H1 (cell line): ENCODE measurements at regions of chr1 and their contacts with region 1.

Region 1: GRCh38 chr1:94061513-94062443 is 59.2 kb downstream of the ABCA4 start:
- DNase-seq: peak in 1 of 2 experiments; percentile 79
- H3K4me3 ChIP-seq: no peak overlapping the region
- H3K27ac ChIP-seq: no peak overlapping the region
- H3K4me1 ChIP-seq: peaks cover 0 to 4% (median 1%) of the 10 kb centered on the region in 4 experiments; a peak in 1 of 7 replicates
- H3K27me3 ChIP-seq: peaks cover 1 to 17% (median 10%) of the 10 kb centered on the region in 4 experiments; a peak in 6 of 7 replicates
- CTCF ChIP-seq: peak; percentile 79 to 95 (median 93)
- EP300 ChIP-seq: no peak
- POLR2A ChIP-seq: no peak
- RAD21 ChIP-seq: peak; percentile 95 to 96

Region 2: GRCh38 chr1:94081566-94082344 is 20.0 kb after region 1 on chr1:
- CTCF ChIA-PET with region 1: interaction called, 119 read pairs
- POLR2A ChIA-PET with region 1: no interaction called
- DNase-seq: no peak
- H3K4me3 ChIP-seq: no peak overlapping the region
- H3K27ac ChIP-seq: no peak overlapping the region
- H3K4me1 ChIP-seq: peaks cover 0 to 3% (median under 1%) of the 10 kb centered on the region in 4 experiments; a peak in 1 of 7 replicates
- H3K27me3 ChIP-seq: no peaks in the 10 kb centered on the region; a peak in 3 of 7 replicates
- CTCF ChIP-seq: no peak
- EP300 ChIP-seq: no peak
- POLR2A ChIP-seq: no peak
- RAD21 ChIP-seq: no peak

Region 3: DNA sequence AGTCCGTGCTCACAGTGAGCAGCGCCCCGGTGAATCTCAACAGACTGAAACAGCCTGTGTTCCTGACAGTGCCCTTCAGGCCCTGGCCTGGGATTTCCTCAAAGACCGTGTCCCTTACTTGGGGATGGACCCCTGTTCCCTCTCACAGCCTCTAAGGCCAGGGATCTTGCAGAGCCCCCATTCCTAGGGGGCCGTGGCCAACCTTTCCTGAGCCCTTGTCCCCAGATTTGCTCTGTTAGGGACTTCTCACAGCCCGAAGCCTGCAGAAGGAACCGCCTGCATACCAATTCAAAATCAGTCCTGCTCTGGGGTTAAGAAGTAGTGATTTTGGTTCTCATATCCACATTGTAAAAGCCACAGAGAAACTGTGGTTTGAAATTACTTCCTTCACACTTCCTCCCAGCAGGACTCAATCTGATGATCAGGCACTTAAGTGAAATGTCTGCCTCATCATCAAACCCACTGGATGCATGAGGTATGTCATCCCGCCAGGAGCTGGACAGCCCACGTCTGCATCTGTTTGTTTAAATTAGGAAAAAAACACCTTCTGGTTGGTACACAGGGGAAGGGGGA is 44.3 kb after region 1 on chr1:
- CTCF ChIA-PET with region 1: interaction called, 20 read pairs
- POLR2A ChIA-PET with region 1: no interaction called
- DNase-seq: no peak
- H3K4me3 ChIP-seq: peak overlapping the region in 1 of 4 experiments; percentile 14; a peak in 1 of 8 replicates
- H3K27ac ChIP-seq: no peak overlapping the region
- H3K4me1 ChIP-seq: peaks cover 0 to 13% (median 7%) of the 10 kb centered on the region in 4 experiments; a peak in 6 of 7 replicates
- H3K27me3 ChIP-seq: peaks cover 0 to 5% (median 2%) of the 10 kb centered on the region in 4 experiments; a peak in 3 of 7 replicates
- CTCF ChIP-seq: no peak
- EP300 ChIP-seq: no peak
- POLR2A ChIP-seq: no peak
- RAD21 ChIP-seq: no peak

Region 4: DNA sequence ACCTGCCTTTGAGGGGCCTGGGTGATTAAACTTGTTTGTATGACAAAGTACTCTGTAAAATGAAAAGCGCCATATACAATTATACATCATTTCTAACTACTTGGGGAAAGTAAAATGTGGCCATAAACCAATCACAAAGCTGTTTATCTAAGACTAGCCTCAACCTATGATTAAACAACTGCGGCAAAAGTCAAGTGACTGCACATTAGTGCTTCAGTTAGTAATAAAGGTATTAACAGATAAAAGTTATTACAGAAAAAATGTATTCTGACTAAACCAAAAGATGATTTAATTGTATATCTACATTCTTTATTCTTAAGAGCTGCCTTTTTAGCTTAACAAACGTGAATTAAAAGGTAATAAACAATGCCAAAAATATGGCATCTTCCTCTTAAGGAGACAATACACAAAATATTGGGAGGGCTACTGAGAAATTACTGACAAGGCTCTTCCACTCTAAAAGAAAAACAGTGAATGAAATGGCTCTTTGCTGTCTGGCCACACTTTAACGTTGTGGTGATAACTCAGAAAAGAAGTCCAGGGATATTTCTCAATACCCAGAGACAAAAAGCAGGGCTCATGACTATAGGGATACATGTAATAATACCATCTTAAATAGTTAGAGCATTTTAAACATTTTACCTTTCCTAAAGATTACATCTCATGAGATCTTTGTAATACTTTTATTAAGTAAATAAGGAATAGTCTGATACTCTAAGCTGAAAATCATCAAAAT is 167.0 kb after region 1 on chr1:
- CTCF ChIA-PET with region 1: interaction called, 151 read pairs
- POLR2A ChIA-PET with region 1: no interaction called
- DNase-seq: no peak
- H3K4me3 ChIP-seq: no peak overlapping the region
- H3K27ac ChIP-seq: no peak overlapping the region
- H3K4me1 ChIP-seq: no peaks in the 10 kb centered on the region
- H3K27me3 ChIP-seq: no peaks in the 10 kb centered on the region
- CTCF ChIP-seq: no peak
- EP300 ChIP-seq: no peak
- POLR2A ChIP-seq: no peak
- RAD21 ChIP-seq: no peak

Region 5: DNA sequence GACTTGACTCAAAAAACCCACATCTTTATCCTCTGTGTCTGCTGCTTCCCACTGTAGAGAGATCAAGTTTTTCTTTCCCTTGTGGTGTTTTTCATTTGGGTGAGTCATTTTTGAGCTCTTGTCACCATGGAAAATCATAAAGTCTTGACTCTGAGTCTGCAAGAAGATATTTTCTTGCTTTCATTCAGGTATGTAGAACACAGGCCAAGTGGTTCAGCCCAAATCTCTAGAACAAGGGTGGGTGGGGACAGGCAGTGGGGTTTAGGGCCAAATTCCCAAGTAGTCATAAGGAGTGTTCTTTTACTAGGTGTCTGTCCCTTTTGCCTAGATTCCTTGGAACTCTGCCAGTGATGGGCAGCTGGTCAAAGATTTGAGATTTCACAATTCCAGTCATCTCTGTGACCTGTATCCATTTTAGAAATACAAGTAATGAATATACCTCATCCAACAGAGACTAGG is 197.1 kb after region 1 on chr1:
- CTCF ChIA-PET with region 1: interaction called, 12 read pairs
- POLR2A ChIA-PET with region 1: no interaction called
- DNase-seq: no peak
- H3K4me3 ChIP-seq: no peak overlapping the region
- H3K27ac ChIP-seq: no peak overlapping the region
- H3K4me1 ChIP-seq: peaks cover 0 to 5% (median 2%) of the 10 kb centered on the region in 4 experiments; a peak in 2 of 7 replicates
- H3K27me3 ChIP-seq: peaks cover 39 to 75% (median 60%) of the 10 kb centered on the region in 4 experiments
- CTCF ChIP-seq: no peak
- EP300 ChIP-seq: no peak
- POLR2A ChIP-seq: no peak
- RAD21 ChIP-seq: no peak

Region 6: GRCh38 chr1:94316836-94317789 is 255.3 kb after region 1 on chr1:
- CTCF ChIA-PET with region 1: interaction called, 15 read pairs
- POLR2A ChIA-PET with region 1: no interaction called
- DNase-seq: no peak
- H3K4me3 ChIP-seq: no peak overlapping the region
- H3K27ac ChIP-seq: no peak overlapping the region
- H3K4me1 ChIP-seq: peaks cover 0 to 3% (median under 1%) of the 10 kb centered on the region in 4 experiments; a peak in 3 of 7 replicates
- H3K27me3 ChIP-seq: no peaks in the 10 kb centered on the region
- CTCF ChIP-seq: no peak
- EP300 ChIP-seq: no peak
- POLR2A ChIP-seq: no peak
- RAD21 ChIP-seq: no peak